B cell (primary cell): ENCODE measurements at regions of chr19 and their contacts with region 1.

Region 1: GRCh38 chr19:19138169-19138981 is at the start of gene TMEM161A:
- DNase-seq: peak; percentile 96
- ATAC-seq: peak; percentile 100
- H3K4me3 ChIP-seq: peak within 1 kb of the TSS; percentile 78 to 90 (median 86)
- H3K4me3 Mint-ChIP-seq: peak within 1 kb of the TSS; percentile 97
- H3K27ac ChIP-seq: peak within 1 kb of the TSS; percentile 29 to 70
- H3K27ac Mint-ChIP-seq: peak within 1 kb of the TSS; percentile 93
- H3K4me1 ChIP-seq: peaks cover 15 to 26% of the 10 kb centered on the region in 2 donors
- H3K4me1 Mint-ChIP-seq: peaks cover 41% of the 10 kb centered on the region
- H3K27me3 ChIP-seq: no peaks in the 10 kb centered on the region
- H3K27me3 Mint-ChIP-seq: no peaks in the 10 kb centered on the region
- CTCF ChIP-seq: no peak
- total RNA-seq, gene TMEM161A: 23.2 and 23.6 TPM in 2 replicates

Region 2: GRCh38 chr19:18809150-18809868 is 329.1 kb before region 1 on chr19:
- CTCF ChIA-PET with region 1: no interaction called
- POLR2A ChIA-PET with region 1: no interaction called
- intact Hi-C with region 1: no loop called
- DNase-seq: no peak
- ATAC-seq: no peak
- H3K4me3 ChIP-seq: no peak overlapping the region
- H3K4me3 Mint-ChIP-seq: no peak overlapping the region
- H3K27ac ChIP-seq: no peak overlapping the region
- H3K27ac Mint-ChIP-seq: no peak overlapping the region
- H3K4me1 ChIP-seq: no peaks in the 10 kb centered on the region
- H3K4me1 Mint-ChIP-seq: peaks cover 3% of the 10 kb centered on the region
- H3K27me3 ChIP-seq: peaks cover 0 to 7% (median 0%) of the 10 kb centered on the region in 4 experiments
- H3K27me3 Mint-ChIP-seq: peaks cover 9% of the 10 kb centered on the region
- CTCF ChIP-seq: no peak

Region 3: DNA sequence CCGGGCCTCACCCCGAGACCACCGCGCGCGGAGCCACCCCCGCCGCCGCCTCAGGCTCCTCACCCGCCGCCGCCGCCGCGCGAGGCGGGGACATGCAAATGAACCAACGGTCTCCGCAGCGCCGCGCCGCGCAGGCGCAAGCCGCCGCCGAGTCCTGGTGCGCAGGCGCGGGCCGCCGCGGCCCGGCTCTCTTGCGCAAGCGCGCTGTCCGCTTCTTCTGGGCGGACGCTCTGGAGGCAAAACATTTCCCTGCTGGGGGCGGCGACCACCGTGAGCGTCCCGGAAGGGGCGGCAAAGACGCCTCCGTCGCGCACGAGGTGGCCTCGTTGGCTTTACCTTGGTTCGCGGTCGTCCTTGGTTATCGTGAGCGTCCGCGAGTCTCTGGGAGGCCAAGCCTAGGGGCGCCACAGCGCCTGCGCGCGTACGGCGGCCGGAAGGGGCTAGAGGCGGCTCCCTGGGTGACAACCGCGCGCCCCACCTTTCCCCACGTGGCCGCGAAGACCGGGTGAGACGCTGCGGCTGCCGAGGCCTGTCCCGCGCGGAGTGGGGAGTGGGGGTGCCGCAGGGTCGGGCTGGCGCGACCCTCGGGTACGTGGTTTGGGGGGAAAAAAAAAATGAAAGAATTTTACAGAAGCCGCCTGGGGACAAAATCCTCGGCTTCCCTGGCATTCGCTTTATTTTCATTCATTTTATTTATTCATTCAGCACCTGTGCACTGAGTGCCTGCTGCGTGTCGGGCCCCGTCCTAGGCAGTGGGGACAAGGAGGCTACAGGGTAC is 104.8 kb before region 1 on chr19 and contains the starts of genes ARMC6 and SUGP2:
- CTCF ChIA-PET with region 1: no interaction called
- POLR2A ChIA-PET with region 1: no interaction called
- intact Hi-C with region 1: loop called (anchors 1 kb)
- DNase-seq: peak; percentile 98
- ATAC-seq: peak; percentile 82
- H3K4me3 ChIP-seq: peak within 1 kb of the TSS; percentile 68 to 84 (median 74)
- H3K4me3 Mint-ChIP-seq: peak within 1 kb of the TSS; percentile 96
- H3K27ac ChIP-seq: peak within 1 kb of the TSS; percentile 65 to 76
- H3K27ac Mint-ChIP-seq: peak within 1 kb of the TSS; percentile 93
- H3K4me1 ChIP-seq: peaks cover 18 to 24% of the 10 kb centered on the region in 2 donors
- H3K4me1 Mint-ChIP-seq: peaks cover 26% of the 10 kb centered on the region
- H3K27me3 ChIP-seq: no peaks in the 10 kb centered on the region
- H3K27me3 Mint-ChIP-seq: no peaks in the 10 kb centered on the region
- CTCF ChIP-seq: no peak
- total RNA-seq, gene ARMC6: 15.2 TPM in 2 replicates
- total RNA-seq, gene SUGP2: 154 and 164 TPM in 2 replicates

Region 4: DNA sequence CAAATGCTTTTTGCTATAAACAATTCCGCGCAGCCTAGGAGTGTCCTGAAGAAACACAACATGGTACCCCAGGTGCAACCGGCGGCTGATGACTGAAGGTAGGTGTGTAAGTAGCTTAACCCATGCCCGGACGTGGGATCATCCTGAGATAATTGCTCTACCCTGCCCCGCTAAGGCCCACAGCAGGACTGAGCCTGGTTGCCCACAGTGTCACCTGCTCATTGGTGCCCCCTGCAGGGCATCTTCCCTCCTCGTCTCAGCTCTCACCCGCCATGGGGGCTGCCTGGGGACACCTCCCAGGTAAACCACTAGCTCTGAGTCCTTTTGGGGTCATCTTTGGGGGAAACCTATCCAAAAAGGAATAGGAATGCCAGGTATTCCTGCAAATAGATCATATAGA is 22.4 kb before region 1 on chr19:
- CTCF ChIA-PET with region 1: interaction called, 3 read pairs
- POLR2A ChIA-PET with region 1: no interaction called
- intact Hi-C with region 1: loop called (anchors 1 kb)
- DNase-seq: peak; percentile 55
- ATAC-seq: peak; percentile 45
- H3K4me3 ChIP-seq: no peak overlapping the region
- H3K4me3 Mint-ChIP-seq: no peak overlapping the region
- H3K27ac ChIP-seq: no peak overlapping the region
- H3K27ac Mint-ChIP-seq: no peak overlapping the region
- H3K4me1 ChIP-seq: peaks cover 0 to 7% of the 10 kb centered on the region in 2 donors
- H3K4me1 Mint-ChIP-seq: peaks cover 12% of the 10 kb centered on the region
- H3K27me3 ChIP-seq: no peaks in the 10 kb centered on the region
- H3K27me3 Mint-ChIP-seq: no peaks in the 10 kb centered on the region
- CTCF ChIP-seq: peak; percentile 53

Region 5: GRCh38 chr19:19329126-19329525 is 190.8 kb after region 1 on chr19:
- CTCF ChIA-PET with region 1: no interaction called
- POLR2A ChIA-PET with region 1: no interaction called
- intact Hi-C with region 1: no loop called
- DNase-seq: peak; percentile 51
- ATAC-seq: peak; percentile 56
- H3K4me3 ChIP-seq: peak overlapping the region in 4 of 5 experiments; percentile 5 to 26 (median 14)
- H3K4me3 Mint-ChIP-seq: peak overlapping the region; percentile 47
- H3K27ac ChIP-seq: peak overlapping the region; percentile 1 to 62
- H3K27ac Mint-ChIP-seq: peak overlapping the region; percentile 78
- H3K4me1 ChIP-seq: peaks cover 10 to 13% of the 10 kb centered on the region in 2 donors
- H3K4me1 Mint-ChIP-seq: peaks cover 25% of the 10 kb centered on the region
- H3K27me3 ChIP-seq: no peaks in the 10 kb centered on the region
- H3K27me3 Mint-ChIP-seq: no peaks in the 10 kb centered on the region
- CTCF ChIP-seq: no peak